GM12878 (cell line): ENCODE measurements at regions of chr11 and their contacts with region 1.

Region 1: DNA sequence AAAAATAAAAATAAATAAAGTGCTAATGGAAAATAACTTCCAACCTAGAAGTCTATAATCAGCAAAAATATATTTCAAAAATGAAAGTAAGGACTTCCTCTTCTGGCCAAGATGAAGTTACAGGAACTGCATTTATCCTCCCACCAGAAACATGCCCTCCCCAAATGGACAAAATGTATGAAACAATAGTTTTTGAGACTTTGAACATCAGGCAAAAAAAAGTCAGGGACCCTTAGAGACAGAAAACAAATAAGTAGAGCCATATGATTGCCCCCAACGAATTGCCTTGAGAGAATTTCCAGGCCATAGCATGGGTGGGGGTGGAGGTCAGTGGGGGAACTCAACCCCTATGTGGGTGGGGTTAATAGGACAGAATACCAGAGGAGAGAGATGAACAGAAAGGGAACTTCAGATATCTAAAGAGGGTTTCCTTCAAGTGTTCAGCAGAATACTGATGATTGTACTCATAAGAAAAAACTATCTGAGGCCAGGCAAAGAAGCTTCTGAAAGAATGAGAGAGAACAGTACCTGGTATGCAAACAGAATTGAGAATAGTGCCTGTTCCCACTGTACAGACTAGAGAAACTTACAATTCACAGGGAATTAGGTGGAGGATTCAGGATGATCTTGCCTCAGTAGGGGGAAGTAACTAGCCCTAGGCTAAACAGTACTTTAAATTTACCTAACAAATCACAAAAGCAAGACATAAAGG is 26.6 kb upstream of the IL10RA start:
- DNase-seq: no peak
- ATAC-seq: peak; percentile 65
- H3K4me3 ChIP-seq: no peak overlapping the region
- H3K27ac ChIP-seq: peak overlapping the region; percentile 31
- H3K4me1 ChIP-seq: peaks cover 13% of the 10 kb centered on the region
- H3K27me3 ChIP-seq: no peaks in the 10 kb centered on the region
- CTCF ChIP-seq: no peak
- EP300 ChIP-seq: no peak
- POLR2A ChIP-seq: no peak
- RAD21 ChIP-seq: no peak

Region 2: DNA sequence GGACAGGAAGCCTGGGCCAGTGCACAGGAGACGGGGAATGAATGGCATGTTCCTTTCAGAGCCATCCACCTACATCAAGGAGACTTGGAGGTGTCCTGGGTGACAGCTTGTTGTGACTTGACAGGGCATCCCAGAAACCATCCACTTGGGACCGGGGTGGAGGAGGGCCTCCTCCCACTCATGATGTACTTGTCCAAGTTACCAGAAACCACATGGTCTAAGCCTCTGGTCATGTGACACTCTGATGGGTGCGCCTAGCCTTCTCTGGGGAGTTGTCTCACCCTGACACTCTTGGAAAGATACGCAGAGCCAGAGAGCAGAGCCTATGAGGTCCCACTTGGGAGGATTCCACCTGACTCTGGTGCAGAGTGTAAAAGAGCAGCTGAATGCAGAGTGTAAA is 61.5 kb before region 1 on chr11:
- CTCF ChIA-PET with region 1: no interaction called
- POLR2A ChIA-PET with region 1: no interaction called
- RAD21 ChIA-PET with region 1: no interaction called
- SMC1A ChIA-PET with region 1: no interaction called
- in situ Hi-C with region 1: no loop called
- intact Hi-C with region 1: no loop called
- DNase-seq: no peak
- ATAC-seq: no peak
- H3K4me3 ChIP-seq: no peak overlapping the region
- H3K27ac ChIP-seq: no peak overlapping the region
- H3K4me1 ChIP-seq: peaks cover 4% of the 10 kb centered on the region
- H3K27me3 ChIP-seq: no peaks in the 10 kb centered on the region
- CTCF ChIP-seq: no peak
- EP300 ChIP-seq: no peak
- POLR2A ChIP-seq: no peak
- RAD21 ChIP-seq: no peak

Region 3: GRCh38 chr11:117919781-117920221 is 39.8 kb before region 1 on chr11:
- CTCF ChIA-PET with region 1: no interaction called
- POLR2A ChIA-PET with region 1: no interaction called
- RAD21 ChIA-PET with region 1: no interaction called
- SMC1A ChIA-PET with region 1: no interaction called
- in situ Hi-C with region 1: no loop called
- intact Hi-C with region 1: no loop called
- DNase-seq: no peak
- ATAC-seq: peak; percentile 83
- H3K4me3 ChIP-seq: no peak overlapping the region
- H3K27ac ChIP-seq: no peak overlapping the region
- H3K4me1 ChIP-seq: peaks cover 8% of the 10 kb centered on the region
- H3K27me3 ChIP-seq: no peaks in the 10 kb centered on the region
- CTCF ChIP-seq: no peak
- EP300 ChIP-seq: no peak
- POLR2A ChIP-seq: no peak
- RAD21 ChIP-seq: no peak

Region 4: DNA sequence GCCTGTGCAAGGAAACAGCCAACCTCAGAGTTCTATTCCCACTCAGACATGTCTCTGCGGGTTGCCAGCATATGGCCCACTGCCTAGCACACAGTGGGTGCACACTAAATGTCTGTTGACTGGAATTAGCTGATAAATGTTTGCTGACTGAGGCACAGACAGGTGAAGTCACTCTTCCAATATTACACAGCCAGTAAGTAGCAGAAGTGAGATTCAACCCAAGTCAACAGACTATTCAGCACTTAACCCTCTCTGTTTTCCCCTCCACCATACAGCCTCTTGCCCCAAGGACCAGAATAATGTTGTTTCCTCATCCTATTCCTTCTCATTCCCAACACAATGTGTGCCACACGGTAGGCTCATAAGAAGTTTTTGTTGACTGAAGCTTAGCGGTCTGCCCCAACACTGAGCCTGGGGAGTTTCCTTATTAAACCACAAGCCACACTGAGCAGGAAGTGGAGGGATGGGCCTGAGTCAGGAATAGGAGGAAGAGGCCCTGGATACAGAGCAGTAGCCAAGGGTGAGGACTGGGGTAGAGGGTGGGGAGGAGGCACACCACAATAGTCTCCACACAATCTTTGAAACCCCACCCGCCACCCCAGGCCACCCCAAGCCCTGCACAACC is 10.9 kb after region 1 on chr11:
- CTCF ChIA-PET with region 1: interaction called, 5 read pairs
- POLR2A ChIA-PET with region 1: interaction called, 13 read pairs
- RAD21 ChIA-PET with region 1: interaction called, 4 read pairs
- SMC1A ChIA-PET with region 1: interaction called, 20 read pairs
- in situ Hi-C with region 1: no loop called
- intact Hi-C with region 1: no loop called
- DNase-seq: no peak
- ATAC-seq: peak; percentile 77
- H3K4me3 ChIP-seq: no peak overlapping the region
- H3K27ac ChIP-seq: no peak overlapping the region
- H3K4me1 ChIP-seq: peaks cover 13% of the 10 kb centered on the region
- H3K27me3 ChIP-seq: no peaks in the 10 kb centered on the region
- CTCF ChIP-seq: no peak
- EP300 ChIP-seq: no peak
- POLR2A ChIP-seq: no peak
- RAD21 ChIP-seq: no peak

Region 5: DNA sequence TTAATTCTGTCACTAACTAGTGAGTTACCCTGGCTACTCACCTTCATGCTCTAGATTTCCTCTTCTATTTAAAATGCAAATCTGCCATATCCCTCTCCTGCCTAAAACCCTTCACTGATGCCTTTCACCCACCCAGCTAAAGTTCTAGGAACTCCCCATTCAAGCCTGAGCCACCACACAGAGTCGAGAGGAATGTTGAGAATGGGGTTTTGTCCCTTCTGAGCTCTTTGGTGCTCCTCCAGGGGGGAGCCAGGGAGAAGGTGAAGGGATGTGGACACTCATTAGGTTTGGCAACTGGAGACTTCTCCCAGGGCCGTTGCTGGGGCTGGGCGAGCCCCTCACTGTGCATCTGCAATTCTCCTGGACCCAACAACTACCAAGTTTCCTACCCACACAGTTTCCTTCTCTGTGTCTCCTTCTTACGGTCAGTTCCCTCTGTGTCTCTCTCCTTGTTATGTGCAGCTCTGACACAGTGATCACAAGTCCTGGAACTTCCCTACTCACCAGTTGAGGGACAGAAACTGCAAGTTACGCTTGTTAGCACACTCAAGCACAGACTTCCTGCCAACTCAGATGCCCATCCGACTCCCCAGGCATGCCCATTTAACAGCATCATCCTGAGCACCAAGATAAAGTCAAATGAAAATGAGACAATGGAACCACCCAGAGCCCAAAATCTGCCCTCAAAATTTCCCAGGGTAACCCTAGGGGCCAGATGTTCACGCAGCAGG is 20.1 kb after region 1 on chr11:
- CTCF ChIA-PET with region 1: interaction called, 9 read pairs
- POLR2A ChIA-PET with region 1: interaction called, 13 read pairs
- RAD21 ChIA-PET with region 1: interaction called, 15 read pairs
- SMC1A ChIA-PET with region 1: interaction called, 167 read pairs
- in situ Hi-C with region 1: no loop called
- intact Hi-C with region 1: no loop called
- DNase-seq: peak; percentile 82
- ATAC-seq: peak; percentile 91
- H3K4me3 ChIP-seq: no peak overlapping the region
- H3K27ac ChIP-seq: 0 out of 2 replicates have a peak overlapping the region, but pooled peaks have one; percentile 20
- H3K4me1 ChIP-seq: peaks cover 18% of the 10 kb centered on the region
- H3K27me3 ChIP-seq: no peaks in the 10 kb centered on the region
- CTCF ChIP-seq: no peak
- EP300 ChIP-seq: no peak
- POLR2A ChIP-seq: no peak
- RAD21 ChIP-seq: no peak

Region 6: GRCh38 chr11:118068206-118068944 is 108.8 kb after region 1 on chr11:
- CTCF ChIA-PET with region 1: no interaction called
- POLR2A ChIA-PET with region 1: no interaction called
- RAD21 ChIA-PET with region 1: no interaction called
- SMC1A ChIA-PET with region 1: no interaction called
- in situ Hi-C with region 1: no loop called
- intact Hi-C with region 1: no loop called
- DNase-seq: no peak
- ATAC-seq: no peak
- H3K4me3 ChIP-seq: no peak overlapping the region
- H3K27ac ChIP-seq: no peak overlapping the region
- H3K4me1 ChIP-seq: no peaks in the 10 kb centered on the region
- H3K27me3 ChIP-seq: no peaks in the 10 kb centered on the region; a peak in 1 of 4 replicates
- CTCF ChIP-seq: no peak
- EP300 ChIP-seq: no peak
- POLR2A ChIP-seq: no peak
- RAD21 ChIP-seq: no peak